OCI-LY7 (cell line): ENCODE measurements at regions of chr9 and their contacts with region 1.

Region 1: GRCh38 chr9:95268681-95269080 is 48.8 kb downstream of the FANCC start:
- DNase-seq: peak; percentile 24
- H3K4me3 ChIP-seq: no peak overlapping the region
- H3K27ac ChIP-seq: no peak overlapping the region
- H3K4me1 ChIP-seq: peaks cover 37% of the 10 kb centered on the region
- CTCF ChIP-seq: peak; percentile 64

Region 2: DNA sequence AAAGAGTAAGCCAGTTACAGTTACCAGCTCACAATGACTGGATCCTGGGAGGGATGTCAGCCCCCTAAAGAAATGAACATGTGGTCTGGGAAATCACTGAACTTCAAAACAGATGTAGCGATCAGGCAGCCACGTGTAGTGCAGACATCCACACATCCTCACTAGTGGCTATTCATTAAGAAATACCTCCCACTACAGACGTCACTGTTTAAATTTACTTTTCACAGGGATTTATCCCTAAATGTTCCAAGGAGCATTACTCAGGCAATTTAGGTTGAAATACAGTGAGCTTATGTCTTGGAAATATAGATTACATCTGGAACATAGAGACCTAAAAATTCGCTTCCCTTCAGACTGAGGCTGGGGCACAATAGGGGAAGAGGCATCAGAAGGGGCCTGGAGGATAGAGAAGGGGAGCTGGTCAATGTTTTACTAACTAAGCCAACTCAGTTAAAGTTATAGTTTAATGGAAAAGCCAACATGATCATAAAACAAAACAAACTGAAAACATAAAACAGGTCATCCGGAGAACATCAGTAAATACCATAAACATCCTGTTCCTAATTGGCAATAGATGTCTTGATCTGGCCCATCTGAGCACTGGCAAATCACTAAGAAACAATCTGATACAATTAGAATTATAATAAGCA is 43.5 kb before region 1 on chr9:
- CTCF ChIA-PET with region 1: no interaction called
- POLR2A ChIA-PET with region 1: no interaction called
- intact Hi-C with region 1: no loop called
- DNase-seq: no peak
- H3K4me3 ChIP-seq: no peak overlapping the region
- H3K27ac ChIP-seq: no peak overlapping the region
- H3K4me1 ChIP-seq: no peaks in the 10 kb centered on the region
- CTCF ChIP-seq: no peak

Region 3: GRCh38 chr9:95280745-95281144 is 12.1 kb after region 1 on chr9:
- CTCF ChIA-PET with region 1: no interaction called
- POLR2A ChIA-PET with region 1: interaction called, 12 read pairs
- intact Hi-C with region 1: no loop called
- DNase-seq: no peak
- H3K4me3 ChIP-seq: no peak overlapping the region
- H3K27ac ChIP-seq: no peak overlapping the region
- H3K4me1 ChIP-seq: no peaks in the 10 kb centered on the region
- CTCF ChIP-seq: no peak

Region 4: DNA sequence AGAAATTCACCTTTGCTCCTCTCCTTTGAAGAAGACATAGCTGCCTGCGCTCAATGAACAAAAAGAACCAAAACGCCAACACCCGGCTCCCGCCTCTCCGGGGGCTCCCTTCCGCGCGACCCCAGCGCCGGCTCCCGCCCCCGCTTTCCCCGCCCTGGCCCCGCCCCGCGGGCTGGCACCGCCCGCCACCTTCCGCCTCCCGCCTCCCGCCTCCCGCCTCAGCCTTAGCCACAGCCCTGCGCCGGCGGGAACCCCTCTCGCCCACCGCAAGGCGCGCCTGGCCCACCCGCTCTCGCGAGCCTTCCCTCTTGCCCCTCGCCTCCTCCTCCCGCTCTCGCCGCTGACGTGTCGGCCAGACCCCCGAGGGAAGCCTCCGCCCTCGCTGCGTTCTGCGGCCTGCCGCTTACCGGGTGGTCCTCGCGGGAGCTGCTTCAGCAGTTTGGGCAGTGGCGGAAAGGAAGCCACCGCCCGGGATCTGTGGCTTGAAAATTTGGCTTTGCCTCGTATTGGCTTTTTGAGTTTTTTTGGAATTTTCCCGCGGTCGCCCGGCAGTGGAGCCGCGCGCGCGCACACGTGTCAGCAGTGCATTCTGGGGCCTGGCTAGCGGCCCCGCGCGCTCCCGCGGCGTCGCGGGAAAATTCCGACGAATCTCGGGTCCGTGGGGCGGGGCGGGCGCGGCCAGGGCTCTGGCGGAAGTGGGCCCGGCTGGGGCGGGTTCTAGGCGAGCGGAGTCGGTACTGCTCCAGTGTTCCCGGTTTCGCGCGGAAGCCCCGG is 48.6 kb after region 1 on chr9 and contains the start of gene FANCC:
- CTCF ChIA-PET with region 1: no interaction called
- POLR2A ChIA-PET with region 1: interaction called, 6 read pairs
- intact Hi-C with region 1: loop called (anchors 2 kb)
- DNase-seq: peak; percentile 91
- H3K4me3 ChIP-seq: peak within 1 kb of the TSS; percentile 79
- H3K27ac ChIP-seq: peak within 1 kb of the TSS; percentile 84
- H3K4me1 ChIP-seq: peaks cover 14% of the 10 kb centered on the region
- CTCF ChIP-seq: 0 out of 2 replicates have a peak, but pooled peaks have one; percentile 24
- total RNA-seq, gene FANCC: 12.3 and 13.9 TPM in 2 replicates

Region 5: DNA sequence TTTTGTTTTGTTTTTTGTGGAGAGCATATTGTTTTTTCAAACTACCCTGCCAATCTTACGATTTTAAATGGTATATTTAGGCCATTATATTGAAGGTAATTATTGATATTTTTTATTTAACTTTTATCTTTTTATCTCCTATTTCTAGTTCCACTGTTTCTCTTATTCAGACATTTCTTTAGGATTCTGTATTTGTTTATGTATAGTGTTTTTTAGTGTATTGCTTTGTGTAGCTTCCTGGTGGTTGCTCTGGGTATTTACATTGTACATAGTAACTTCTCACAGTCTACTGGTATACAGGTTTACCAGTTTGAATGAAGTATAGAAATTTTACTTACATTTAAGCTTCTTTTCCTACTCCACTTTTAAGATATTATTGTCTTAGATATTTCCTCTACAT is 670.0 kb after region 1 on chr9:
- CTCF ChIA-PET with region 1: no interaction called
- POLR2A ChIA-PET with region 1: no interaction called
- intact Hi-C with region 1: no loop called
- DNase-seq: peak; percentile 9
- H3K4me3 ChIP-seq: no peak overlapping the region
- H3K27ac ChIP-seq: no peak overlapping the region
- H3K4me1 ChIP-seq: no peaks in the 10 kb centered on the region
- CTCF ChIP-seq: peak; percentile 63